Heart right ventricle (tissue), 16 donors: ENCODE measurements at regions of chr19 and their contacts with region 1.

Region 1: GRCh38 chr19:42132851-42133528 is 744 bp upstream of the POU2F2 start:
- DNase-seq: peak; percentile 32 to 74
- ATAC-seq: peak; percentile 65 to 84 (median 78)
- H3K4me3 ChIP-seq: peak overlapping the region in 9 of 10 donors; percentile 7 to 58 (median 30)
- H3K27ac ChIP-seq: peak overlapping the region in 1 of 10 donors; percentile 64
- H3K4me1 ChIP-seq: peaks cover 0 to 45% (median 14%) of the 10 kb centered on the region in 9 donors
- H3K27me3 ChIP-seq: peaks cover 0 to 76% (median 48%) of the 10 kb centered on the region in 7 donors
- CTCF ChIP-seq: peak; percentile 89 to 99 (median 97)

Region 2: GRCh38 chr19:42176990-42177685 is 44.1 kb after region 1 on chr19:
- intact Hi-C with region 1: loop called in 4 of 10 experiments (anchors 5 kb)
- DNase-seq: peak; percentile 48 to 73
- ATAC-seq: peak; percentile 87 to 94 (median 92)
- H3K4me3 ChIP-seq: peak overlapping the region in 9 of 10 donors; percentile 32 to 52 (median 46)
- H3K27ac ChIP-seq: no peak overlapping the region
- H3K4me1 ChIP-seq: peaks cover 0 to 15% (median 11%) of the 10 kb centered on the region in 9 donors
- H3K27me3 ChIP-seq: peaks cover 0 to 91% (median 85%) of the 10 kb centered on the region in 7 donors
- CTCF ChIP-seq: peak in 6 of 9 donors; percentile 32 to 69 (median 59)

Region 3: GRCh38 chr19:42184401-42184861 is 51.4 kb after region 1 on chr19:
- intact Hi-C with region 1: loop called (anchors 1 to 5 kb)
- DNase-seq: peak; percentile 65 to 68
- ATAC-seq: peak; percentile 56 to 86 (median 81)
- H3K4me3 ChIP-seq: no peak overlapping the region
- H3K27ac ChIP-seq: peak overlapping the region in 1 of 10 donors; percentile 64
- H3K4me1 ChIP-seq: peaks cover 0 to 33% (median 0%) of the 10 kb centered on the region in 9 donors
- H3K27me3 ChIP-seq: peaks cover 0 to 43% (median 35%) of the 10 kb centered on the region in 7 donors
- CTCF ChIP-seq: peak; percentile 65 to 91 (median 85)

Region 4: GRCh38 chr19:42199440-42200115 is 66.6 kb after region 1 on chr19:
- intact Hi-C with region 1: loop called in 1 of 10 experiments (anchors 5 kb)
- DNase-seq: peak; percentile 26 to 50
- ATAC-seq: peak in 7 of 8 donors; percentile 34 to 72 (median 49)
- H3K4me3 ChIP-seq: peak overlapping the region in 1 of 10 donors; percentile 44
- H3K27ac ChIP-seq: peak overlapping the region in 7 of 10 donors; percentile 3 to 93 (median 21)
- H3K4me1 ChIP-seq: peaks cover 0 to 81% (median 13%) of the 10 kb centered on the region in 9 donors
- H3K27me3 ChIP-seq: no peaks in the 10 kb centered on the region
- CTCF ChIP-seq: peak in 1 of 9 donors; percentile 31

Region 5: GRCh38 chr19:42295831-42296525 is 163.0 kb after region 1 on chr19:
- intact Hi-C with region 1: loop called in 1 of 10 experiments (anchors 10 kb)
- DNase-seq: peak; percentile 86 to 89
- ATAC-seq: peak; percentile 59 to 86 (median 80)
- H3K4me3 ChIP-seq: no peak overlapping the region
- H3K27ac ChIP-seq: peak overlapping the region in 1 of 10 donors; percentile 10
- H3K4me1 ChIP-seq: no peaks in the 10 kb centered on the region
- H3K27me3 ChIP-seq: no peaks in the 10 kb centered on the region
- CTCF ChIP-seq: peak; percentile 81 to 97 (median 96)

Region 6: DNA sequence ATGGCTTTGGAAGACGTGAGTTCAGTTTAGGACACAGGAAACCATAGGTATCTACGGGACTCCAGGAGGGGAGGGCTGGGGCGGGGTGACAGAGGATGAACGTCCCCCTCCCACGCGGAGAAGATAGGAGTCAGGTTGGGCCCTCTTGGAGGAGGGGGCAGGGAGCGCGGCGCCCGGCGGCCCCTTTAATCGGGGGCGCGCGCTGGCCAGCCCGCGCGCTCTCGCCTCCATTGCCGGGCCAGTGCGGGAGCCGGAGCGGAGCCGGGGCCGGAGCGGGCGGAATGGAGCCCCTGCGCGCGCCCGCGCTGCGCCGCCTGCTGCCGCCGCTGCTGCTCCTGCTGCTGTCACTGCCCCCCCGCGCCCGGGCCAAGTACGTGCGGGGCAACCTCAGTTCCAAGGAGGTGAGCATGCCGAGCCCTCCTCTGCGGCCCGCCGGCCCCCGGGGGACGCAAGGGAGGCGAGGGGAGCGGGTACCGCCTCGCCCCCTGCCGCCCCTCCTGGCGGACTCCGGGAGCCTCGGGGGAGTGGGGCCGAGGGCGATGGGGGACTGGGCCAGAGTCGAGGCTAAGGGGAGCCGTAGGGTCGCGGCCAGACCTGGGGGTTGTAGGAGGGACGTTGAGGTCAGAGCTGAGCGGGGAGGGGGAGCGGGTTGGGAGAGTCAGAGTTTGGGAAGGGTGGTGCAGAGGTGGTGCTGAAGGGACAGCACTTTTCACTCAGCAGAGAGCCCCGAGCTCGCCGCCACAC is 180.3 kb after region 1 on chr19 and contains the start of gene TMEM145:
- intact Hi-C with region 1: loop called in 1 of 10 experiments (anchors 10 kb)
- DNase-seq: no peak
- ATAC-seq: peak; percentile 70 to 87 (median 82)
- H3K4me3 ChIP-seq: peak within 1 kb of the TSS; percentile 10 to 64 (median 56)
- H3K27ac ChIP-seq: no peak within 1 kb of the TSS
- H3K4me1 ChIP-seq: peaks cover 0 to 21% (median 11%) of the 10 kb centered on the region in 9 donors
- H3K27me3 ChIP-seq: peaks cover 0 to 51% (median 17%) of the 10 kb centered on the region in 7 donors
- CTCF ChIP-seq: peak in 4 of 9 donors; percentile 7 to 43 (median 20)
- total RNA-seq, gene TMEM145: 0.15 to 1.0 (median 0.49) TPM in 5 of 10 donors, not detected in the others

Region 7: GRCh38 chr19:42325273-42325895 is 192.4 kb after region 1 on chr19 and contains the start of gene MEGF8:
- intact Hi-C with region 1: loop called in 7 of 10 experiments (anchors 2 to 10 kb)
- DNase-seq: peak; percentile 98
- ATAC-seq: peak; percentile 98 to 99 (median 98)
- H3K4me3 ChIP-seq: peak within 1 kb of the TSS; percentile 72 to 96 (median 84)
- H3K27ac ChIP-seq: peak within 1 kb of the TSS; percentile 51 to 90 (median 84)
- H3K4me1 ChIP-seq: peaks cover 9 to 36% (median 29%) of the 10 kb centered on the region in 9 donors
- H3K27me3 ChIP-seq: peaks cover 12 to 35% (median 26%) of the 10 kb centered on the region in 7 donors
- CTCF ChIP-seq: peak; percentile 69 to 96 (median 86)
- total RNA-seq, gene MEGF8: 33.4 to 44.6 (median 40.4) TPM

Region 8: DNA sequence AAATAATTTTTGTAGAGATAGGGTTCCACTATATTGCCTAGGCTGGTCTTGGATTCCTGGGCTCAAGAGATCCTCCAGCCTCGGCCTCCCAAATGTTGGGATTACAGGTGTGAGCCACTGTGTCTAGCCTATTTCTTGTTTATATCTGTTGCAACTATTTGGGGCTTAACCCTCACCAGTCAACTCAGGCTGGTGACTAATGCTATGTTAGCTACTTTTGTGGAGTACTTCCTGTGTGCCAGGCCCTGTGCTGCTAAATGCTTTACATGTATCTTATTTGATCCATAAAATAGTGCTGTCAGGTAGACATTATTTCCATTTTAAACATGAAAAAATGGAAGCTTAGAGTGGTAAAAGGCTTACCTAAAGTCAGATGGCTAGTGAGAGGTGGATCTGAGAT is 381.5 kb after region 1 on chr19:
- intact Hi-C with region 1: no loop called
- DNase-seq: no peak
- ATAC-seq: no peak
- H3K4me3 ChIP-seq: no peak overlapping the region
- H3K27ac ChIP-seq: no peak overlapping the region
- H3K4me1 ChIP-seq: no peaks in the 10 kb centered on the region
- H3K27me3 ChIP-seq: no peaks in the 10 kb centered on the region
- CTCF ChIP-seq: no peak